ENCODE measurements at regions of chr17 and their contacts with region 1.

Region 1: DNA sequence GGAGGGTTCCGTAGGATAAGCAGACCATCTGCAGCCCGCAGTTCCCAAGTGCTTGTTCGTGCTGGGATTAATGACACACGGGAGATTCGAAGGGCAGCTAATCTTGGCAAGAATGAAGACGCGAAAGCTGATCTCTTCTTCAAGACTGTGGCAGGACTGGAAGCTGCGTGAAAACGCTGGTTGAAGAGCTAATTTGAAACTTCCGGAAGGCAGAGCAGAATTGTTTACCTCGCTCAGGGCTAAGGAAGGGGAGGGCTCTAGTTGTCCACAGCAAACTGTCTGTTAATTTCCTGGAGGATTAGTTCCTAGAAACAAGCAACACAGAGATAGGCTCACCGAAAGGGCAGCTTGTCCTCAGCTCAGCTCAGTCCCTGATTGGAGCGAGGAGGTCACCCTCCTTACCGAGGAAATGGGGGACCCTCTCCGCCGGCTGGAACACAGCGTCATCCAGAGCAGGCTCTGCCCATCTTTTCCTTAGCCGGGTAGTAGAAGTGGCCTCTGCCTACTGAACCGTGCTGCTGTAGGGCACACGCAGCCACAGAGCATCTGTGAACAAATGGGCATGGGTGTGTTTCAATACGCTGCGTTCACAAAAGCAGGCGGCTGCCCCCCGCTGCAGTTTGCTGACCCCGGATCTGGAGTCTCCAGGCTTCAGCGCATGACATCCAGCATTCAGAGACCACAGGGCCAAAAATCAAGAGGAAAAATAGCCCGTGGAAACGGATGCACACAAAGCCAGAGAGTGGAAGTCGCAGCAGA is 16.7 kb upstream of the BAIAP2 start:
- DNase-seq: no peak
- H3K4me3 Mint-ChIP-seq: no peak overlapping the region
- H3K27ac Mint-ChIP-seq: no peak overlapping the region
- H3K4me1 Mint-ChIP-seq: no peaks in the 10 kb centered on the region
- H3K27me3 Mint-ChIP-seq: no peaks in the 10 kb centered on the region
- CTCF ChIP-seq: no peak

Region 2: DNA sequence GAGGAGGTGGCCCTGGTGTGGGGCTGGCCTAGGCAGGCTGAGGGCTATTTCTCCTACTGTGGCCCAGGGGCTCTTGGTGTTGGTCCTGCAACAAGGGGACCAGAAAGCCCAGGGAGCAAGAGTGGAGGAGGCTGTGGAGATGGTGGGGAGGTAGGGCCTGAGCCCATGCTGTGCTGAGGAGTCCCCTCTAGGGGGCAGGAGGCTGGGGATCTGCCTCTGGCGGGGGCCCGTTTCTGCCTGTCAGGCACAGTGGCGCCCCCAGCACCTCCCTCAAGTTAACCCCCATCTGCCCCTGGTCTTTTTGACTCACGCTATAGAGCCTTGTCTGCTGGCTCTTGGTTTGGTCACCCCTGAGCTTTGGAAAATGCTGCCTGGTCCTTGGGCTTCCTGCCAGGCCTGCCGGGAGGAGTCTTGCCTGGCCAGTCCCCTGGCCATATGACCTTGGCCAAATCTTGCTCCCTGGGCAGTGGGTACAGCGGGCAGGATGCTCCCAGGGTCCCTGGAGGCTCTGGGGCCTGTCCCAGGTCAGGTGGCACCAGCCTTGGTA is 22.6 kb after region 1 on chr17:
- CTCF ChIA-PET with region 1: interaction called, 20 read pairs
- POLR2A ChIA-PET with region 1: interaction called, 7 read pairs
- intact Hi-C with region 1: no loop called
- DNase-seq: peak; percentile 22
- H3K4me3 Mint-ChIP-seq: peak overlapping the region; percentile 59
- H3K27ac Mint-ChIP-seq: peak overlapping the region; percentile 69
- H3K4me1 Mint-ChIP-seq: peaks cover 63% of the 10 kb centered on the region
- H3K27me3 Mint-ChIP-seq: no peaks in the 10 kb centered on the region
- CTCF ChIP-seq: peak; percentile 39

Region 3: DNA sequence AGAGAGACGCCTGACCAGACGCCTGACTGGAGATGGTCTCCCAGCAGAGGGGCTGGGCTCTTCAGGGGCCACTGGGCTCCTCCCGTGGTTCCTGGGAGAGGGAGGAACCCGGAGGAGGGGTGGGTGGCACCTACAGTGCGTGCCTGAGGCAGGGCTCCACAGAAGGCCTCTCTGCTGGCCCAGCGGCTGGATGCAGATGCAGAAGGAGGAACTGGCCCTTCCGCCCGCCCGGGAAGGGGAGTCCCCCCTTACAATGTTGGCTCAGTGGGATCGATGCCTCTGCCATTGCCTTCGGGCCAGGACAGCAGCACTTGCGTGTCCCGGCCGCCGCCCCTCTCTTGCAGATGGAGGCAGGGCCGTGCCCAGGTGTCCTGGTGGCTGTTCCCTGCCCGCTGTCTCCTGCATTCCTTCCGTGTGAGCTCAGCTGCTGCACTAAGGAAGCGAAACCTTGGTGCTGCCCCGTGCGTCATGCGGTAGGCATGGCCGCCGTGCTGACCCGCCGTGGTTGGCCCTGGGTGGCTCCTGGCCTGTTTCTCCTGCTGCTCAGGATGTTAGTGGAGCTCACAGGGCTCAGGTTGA is 31.8 kb after region 1 on chr17:
- CTCF ChIA-PET with region 1: interaction called, 11 read pairs
- POLR2A ChIA-PET with region 1: interaction called, 4 read pairs
- intact Hi-C with region 1: no loop called
- DNase-seq: peak; percentile 93
- H3K4me3 Mint-ChIP-seq: peak overlapping the region; percentile 68
- H3K27ac Mint-ChIP-seq: peak overlapping the region; percentile 98
- H3K4me1 Mint-ChIP-seq: peaks cover 34% of the 10 kb centered on the region
- H3K27me3 Mint-ChIP-seq: no peaks in the 10 kb centered on the region
- CTCF ChIP-seq: no peak